ENCODE measurements at regions of chr5 and their contacts with region 1.

Region 1: GRCh38 chr5:76641514-76642120 is 18.4 kb upstream of the F2RL2 start:
- DNase-seq: peak; percentile 87
- H3K4me3 Mint-ChIP-seq: no peak overlapping the region
- H3K27ac Mint-ChIP-seq: no peak overlapping the region
- H3K4me1 Mint-ChIP-seq: peaks cover 4% of the 10 kb centered on the region
- H3K27me3 Mint-ChIP-seq: no peaks in the 10 kb centered on the region

Region 2: GRCh38 chr5:76337953-76338451 is 303.6 kb before region 1 on chr5:
- CTCF ChIA-PET with region 1: interaction called, 3 read pairs
- intact Hi-C with region 1: loop called (anchors 2 kb)
- DNase-seq: peak; percentile 62
- H3K4me3 Mint-ChIP-seq: no peak overlapping the region
- H3K27ac Mint-ChIP-seq: no peak overlapping the region
- H3K4me1 Mint-ChIP-seq: peaks cover 18% of the 10 kb centered on the region
- H3K27me3 Mint-ChIP-seq: no peaks in the 10 kb centered on the region

Region 3: DNA sequence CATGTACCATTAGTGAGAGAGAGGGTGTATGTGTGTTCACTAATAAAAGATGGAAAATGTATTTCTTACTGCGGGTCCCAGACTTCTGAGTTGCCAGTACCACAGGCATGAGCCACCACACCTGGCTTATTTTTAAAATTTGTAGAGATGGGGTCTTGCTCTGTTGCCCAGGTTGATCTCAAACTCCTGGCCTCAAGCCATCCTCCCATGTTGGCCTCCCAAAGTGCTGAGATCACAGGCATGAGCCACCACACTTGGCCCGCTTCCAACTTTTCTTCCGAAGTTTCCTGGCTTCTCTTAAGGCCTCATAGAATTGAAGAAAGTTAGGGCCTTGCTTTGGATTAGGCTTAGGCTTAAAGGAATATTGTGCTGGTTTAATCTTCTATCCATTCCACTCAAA is 22.0 kb after region 1 on chr5:
- CTCF ChIA-PET with region 1: no interaction called
- intact Hi-C with region 1: no loop called
- DNase-seq: no peak
- H3K4me3 Mint-ChIP-seq: no peak overlapping the region
- H3K27ac Mint-ChIP-seq: no peak overlapping the region
- H3K4me1 Mint-ChIP-seq: no peaks in the 10 kb centered on the region
- H3K27me3 Mint-ChIP-seq: no peaks in the 10 kb centered on the region